ENCODE measurements at regions of chr17 and their contacts with region 1.

Region 1: DNA sequence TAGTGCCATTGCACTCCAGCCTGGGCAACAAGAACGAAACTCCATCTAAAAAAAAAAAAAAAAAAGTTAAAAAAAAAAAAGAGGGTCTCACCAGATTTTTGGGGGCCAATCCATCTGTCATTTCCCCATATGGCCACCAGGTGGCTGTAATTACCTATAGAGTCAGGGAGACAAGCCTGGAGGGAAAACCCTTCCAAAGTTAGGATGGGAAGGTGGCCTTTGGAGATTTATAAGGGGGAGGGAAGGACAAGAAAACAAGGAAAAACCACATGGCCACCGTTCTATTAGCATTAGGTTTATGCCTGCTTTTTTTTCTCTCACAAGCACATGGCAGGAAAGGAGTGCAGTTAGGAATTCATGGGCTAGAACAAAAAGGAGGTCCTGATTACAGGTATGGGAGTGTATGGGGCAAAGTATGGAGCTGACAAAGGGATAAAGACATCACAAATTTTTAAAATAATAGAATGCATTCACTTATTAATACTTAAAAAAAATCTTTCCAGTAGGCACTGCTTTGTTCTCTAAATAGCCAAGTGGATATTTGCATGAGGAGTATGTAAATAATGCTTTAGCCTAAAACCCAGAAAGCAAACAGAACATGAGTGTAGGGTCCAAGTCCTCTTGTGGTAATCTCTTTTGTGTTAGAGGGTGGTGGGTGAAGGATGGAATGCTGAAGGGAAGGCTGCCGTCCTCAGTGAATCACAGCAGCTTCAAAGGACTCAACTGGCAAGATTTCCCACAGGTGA is 5.1 kb downstream of the CYB5D1 start:
- DNase-seq: peak in 3 of 10 donors; percentile 28 to 55 (median 53)
- H3K4me3 ChIP-seq: no peak overlapping the region
- H3K27ac ChIP-seq: no peak overlapping the region
- H3K27me3 ChIP-seq: no peaks in the 10 kb centered on the region
- CTCF ChIP-seq: peak; percentile 63 to 95 (median 86)

Region 2: DNA sequence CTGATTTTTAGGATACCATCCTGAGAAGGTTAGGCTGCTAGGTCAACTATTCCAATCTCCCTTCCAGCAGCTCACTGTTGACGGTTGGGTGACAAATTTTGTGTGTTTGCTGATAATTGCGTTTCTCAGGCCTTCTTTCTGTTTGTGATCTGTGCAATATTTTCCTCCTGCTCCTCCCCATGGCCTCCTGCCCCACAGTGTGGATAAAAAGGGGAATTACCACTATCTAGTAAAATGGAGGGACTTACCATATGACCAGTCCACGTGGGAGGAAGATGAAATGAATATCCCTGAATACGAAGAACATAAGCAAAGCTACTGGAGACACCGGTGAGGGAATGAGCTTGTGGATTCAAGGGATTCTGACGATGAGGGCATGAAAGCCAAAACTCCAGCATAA is 34.9 kb after region 1 on chr17:
- intact Hi-C with region 1: loop called (anchors 1 to 5 kb)
- DNase-seq: peak in 2 of 10 donors; percentile 26 to 55
- H3K4me3 ChIP-seq: peak overlapping the region in 2 of 59 donors; percentile 2 to 6
- H3K27ac ChIP-seq: peak overlapping the region in 37 of 59 donors; percentile 1 to 67 (median 39)
- H3K27me3 ChIP-seq: no peaks in the 10 kb centered on the region
- CTCF ChIP-seq: peak; percentile 26 to 84 (median 69)

Region 3: GRCh38 chr17:8057691-8058114 is 194.8 kb after region 1 on chr17:
- intact Hi-C with region 1: loop called (anchors 5 kb)
- DNase-seq: peak in 7 of 10 donors; percentile 25 to 58 (median 48)
- H3K4me3 ChIP-seq: peak overlapping the region in 4 of 59 donors; percentile 1 to 35 (median 11)
- H3K27ac ChIP-seq: no peak overlapping the region
- H3K27me3 ChIP-seq: peaks cover 0 to 53% (median 34%) of the 10 kb centered on the region in 45 donors
- CTCF ChIP-seq: peak; percentile 56 to 93 (median 80)

Measured in dorsolateral prefrontal cortex (tissue), 120 donors.